ENCODE measurements at regions of chr3 and their contacts with region 1.

Region 1: GRCh38 chr3:196274585-196274984 is 12.9 kb downstream of the PCYT1A start:
- DNase-seq: peak; percentile 84
- ATAC-seq: peak; percentile 93
- H3K4me3 Mint-ChIP-seq: peak overlapping the region; percentile 67
- H3K27ac Mint-ChIP-seq: peak overlapping the region; percentile 91
- H3K4me1 Mint-ChIP-seq: peaks cover 68% of the 10 kb centered on the region
- H3K27me3 Mint-ChIP-seq: no peaks in the 10 kb centered on the region

Region 2: DNA sequence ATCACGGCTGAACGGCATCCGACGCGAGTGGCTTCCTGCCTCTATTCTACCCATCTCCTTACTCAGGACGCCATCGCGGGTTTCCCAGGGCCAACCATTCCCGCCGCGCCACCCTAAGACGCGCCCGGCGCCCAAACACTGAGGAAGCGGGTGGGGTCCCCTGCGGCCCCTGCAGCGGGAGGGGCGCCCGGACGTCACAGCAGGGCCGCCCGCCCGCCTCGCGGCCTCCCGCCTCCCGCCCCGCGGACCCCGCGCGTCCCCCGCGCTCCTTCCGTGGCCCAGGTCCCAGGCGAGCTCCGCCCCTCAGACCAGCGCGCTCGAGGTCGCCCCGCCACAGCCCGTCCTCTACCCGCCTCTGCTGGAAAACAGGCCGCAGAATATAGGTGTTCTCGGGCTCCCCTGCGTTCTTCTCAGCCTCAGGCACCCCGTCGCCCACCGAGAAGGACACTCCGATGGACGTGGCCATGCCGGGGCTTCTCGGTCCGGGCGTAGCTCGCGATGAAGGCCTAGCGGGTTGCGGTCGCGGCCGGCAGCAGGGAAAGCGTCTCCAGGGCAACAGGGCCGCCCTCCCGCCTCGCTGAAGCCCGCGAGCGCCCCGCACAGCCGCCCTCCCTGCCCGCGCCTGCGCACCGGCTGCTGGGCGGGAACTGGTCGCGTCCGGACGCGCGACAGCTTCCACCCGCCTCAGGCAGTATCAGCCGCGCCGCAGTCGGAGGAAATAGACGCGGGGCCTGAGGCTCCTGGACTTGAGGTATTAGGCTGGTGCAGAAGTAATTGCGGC is 43.3 kb after region 1 on chr3 and contains the start of gene DYNLT2B:
- CTCF ChIA-PET with region 1: no interaction called
- POLR2A ChIA-PET with region 1: interaction called, 17 read pairs
- DNase-seq: peak; percentile 91
- ATAC-seq: peak; percentile 91
- H3K4me3 Mint-ChIP-seq: peak within 1 kb of the TSS; percentile 94
- H3K27ac Mint-ChIP-seq: peak within 1 kb of the TSS; percentile 98
- H3K4me1 Mint-ChIP-seq: peaks cover 14% of the 10 kb centered on the region
- H3K27me3 Mint-ChIP-seq: no peaks in the 10 kb centered on the region
- total RNA-seq, gene DYNLT2B: 12.0 to 21.1 TPM